Body of pancreas (tissue), 4 donors: ENCODE measurements at regions of chr10 and their contacts with region 1.

Region 1: GRCh38 chr10:89563861-89564478 is 28.6 kb upstream of the SLC16A12 start:
- DNase-seq: peak in 1 of 4 donors; percentile 40
- ATAC-seq: peak; percentile 79
- H3K4me3 ChIP-seq: no peak overlapping the region
- H3K27ac ChIP-seq: no peak overlapping the region
- H3K4me1 ChIP-seq: no peaks in the 10 kb centered on the region
- H3K27me3 ChIP-seq: no peaks in the 10 kb centered on the region
- CTCF ChIP-seq: peak; percentile 65 to 92 (median 84)
- POLR2A ChIP-seq: no peak

Region 2: GRCh38 chr10:88165849-88166271 is 1398.1 kb before region 1 on chr10:
- intact Hi-C with region 1: no loop called
- DNase-seq: no peak
- ATAC-seq: no peak
- H3K4me3 ChIP-seq: no peak overlapping the region
- H3K27ac ChIP-seq: no peak overlapping the region
- H3K4me1 ChIP-seq: no peaks in the 10 kb centered on the region
- H3K27me3 ChIP-seq: no peaks in the 10 kb centered on the region
- CTCF ChIP-seq: no peak
- POLR2A ChIP-seq: no peak

Region 3: GRCh38 chr10:89426230-89426868 is 137.6 kb before region 1 on chr10:
- intact Hi-C with region 1: loop called (anchors 5 kb)
- DNase-seq: peak in 3 of 4 donors; percentile 39 to 41 (median 39)
- ATAC-seq: peak; percentile 85
- H3K4me3 ChIP-seq: no peak overlapping the region
- H3K27ac ChIP-seq: no peak overlapping the region
- H3K4me1 ChIP-seq: peaks cover 10% of the 10 kb centered on the region
- H3K27me3 ChIP-seq: no peaks in the 10 kb centered on the region
- CTCF ChIP-seq: peak; percentile 66 to 93 (median 84)
- POLR2A ChIP-seq: no peak